CD8-positive, alpha-beta T cell (primary cell): ENCODE measurements at regions of chr22 and their contacts with region 1.

Region 1: DNA sequence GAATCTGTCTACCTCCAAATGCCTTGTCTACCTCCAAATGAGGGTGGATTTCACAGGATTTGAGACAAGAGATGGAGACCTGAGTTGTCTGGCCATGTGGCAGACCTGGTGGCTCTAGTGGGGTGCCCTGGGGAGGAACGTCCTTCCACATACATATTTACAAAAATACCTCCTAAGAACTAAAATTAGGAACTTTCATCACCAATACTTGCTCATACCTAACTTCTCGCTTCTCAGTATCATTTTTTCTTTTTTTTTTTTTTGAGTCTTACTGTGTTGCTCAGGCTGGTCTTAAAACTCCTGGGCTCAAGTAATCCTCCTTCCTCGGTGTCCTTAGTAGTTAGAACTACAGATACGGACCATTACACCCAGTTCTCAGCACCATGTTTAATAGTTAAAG is 117.9 kb downstream of the MED15 start:
- DNase-seq: no peak
- ATAC-seq: no peak
- H3K4me3 ChIP-seq: no peak overlapping the region
- H3K4me3 Mint-ChIP-seq: no peak overlapping the region
- H3K27ac ChIP-seq: no peak overlapping the region
- H3K27ac Mint-ChIP-seq: no peak overlapping the region
- H3K4me1 ChIP-seq: no peaks in the 10 kb centered on the region
- H3K4me1 Mint-ChIP-seq: no peaks in the 10 kb centered on the region
- H3K27me3 ChIP-seq: no peaks in the 10 kb centered on the region
- H3K27me3 Mint-ChIP-seq: no peaks in the 10 kb centered on the region
- CTCF ChIP-seq: no peak

Region 2: GRCh38 chr22:19419464-19420178 is 1205.6 kb before region 1 on chr22:
- CTCF ChIA-PET with region 1: no interaction called
- POLR2A ChIA-PET with region 1: no interaction called
- intact Hi-C with region 1: loop called in 1 of 2 experiments (anchors 5 kb)
- DNase-seq: peak in 7 of 9 experiments; percentile 7 to 91 (median 46)
- ATAC-seq: peak; percentile 91
- H3K4me3 ChIP-seq: no peak overlapping the region
- H3K4me3 Mint-ChIP-seq: peak overlapping the region; percentile 16
- H3K27ac ChIP-seq: peak overlapping the region; percentile 54 to 91
- H3K27ac Mint-ChIP-seq: peak overlapping the region; percentile 92
- H3K4me1 ChIP-seq: peaks cover 44% of the 10 kb centered on the region
- H3K4me1 Mint-ChIP-seq: peaks cover 70% of the 10 kb centered on the region
- H3K27me3 ChIP-seq: no peaks in the 10 kb centered on the region
- H3K27me3 Mint-ChIP-seq: no peaks in the 10 kb centered on the region
- CTCF ChIP-seq: no peak

Region 3: DNA sequence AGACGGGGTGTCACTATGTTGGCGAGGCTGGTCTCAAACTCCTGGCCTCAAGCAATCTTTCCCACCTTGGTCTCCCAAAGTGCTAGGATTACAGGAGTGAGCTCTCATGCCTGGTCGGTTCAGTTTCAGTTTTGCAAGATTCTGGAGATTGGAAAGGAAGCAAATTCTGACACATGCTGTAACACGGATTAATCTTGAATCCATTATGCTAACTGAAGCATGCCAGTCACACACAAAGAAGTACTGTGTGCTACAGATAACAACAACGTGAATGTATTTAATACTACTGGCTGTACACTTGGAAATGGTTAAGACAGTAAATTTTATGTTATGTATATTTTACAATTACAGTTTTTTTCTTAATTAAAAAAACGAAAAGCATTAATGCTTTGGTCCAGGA is 10.2 kb before region 1 on chr22:
- CTCF ChIA-PET with region 1: no interaction called
- POLR2A ChIA-PET with region 1: no interaction called
- intact Hi-C with region 1: no loop called
- DNase-seq: no peak
- ATAC-seq: no peak
- H3K4me3 ChIP-seq: no peak overlapping the region
- H3K4me3 Mint-ChIP-seq: no peak overlapping the region
- H3K27ac ChIP-seq: no peak overlapping the region
- H3K27ac Mint-ChIP-seq: no peak overlapping the region
- H3K4me1 ChIP-seq: peaks cover 8% of the 10 kb centered on the region
- H3K4me1 Mint-ChIP-seq: peaks cover 6% of the 10 kb centered on the region
- H3K27me3 ChIP-seq: no peaks in the 10 kb centered on the region
- H3K27me3 Mint-ChIP-seq: no peaks in the 10 kb centered on the region
- CTCF ChIP-seq: no peak

Region 4: DNA sequence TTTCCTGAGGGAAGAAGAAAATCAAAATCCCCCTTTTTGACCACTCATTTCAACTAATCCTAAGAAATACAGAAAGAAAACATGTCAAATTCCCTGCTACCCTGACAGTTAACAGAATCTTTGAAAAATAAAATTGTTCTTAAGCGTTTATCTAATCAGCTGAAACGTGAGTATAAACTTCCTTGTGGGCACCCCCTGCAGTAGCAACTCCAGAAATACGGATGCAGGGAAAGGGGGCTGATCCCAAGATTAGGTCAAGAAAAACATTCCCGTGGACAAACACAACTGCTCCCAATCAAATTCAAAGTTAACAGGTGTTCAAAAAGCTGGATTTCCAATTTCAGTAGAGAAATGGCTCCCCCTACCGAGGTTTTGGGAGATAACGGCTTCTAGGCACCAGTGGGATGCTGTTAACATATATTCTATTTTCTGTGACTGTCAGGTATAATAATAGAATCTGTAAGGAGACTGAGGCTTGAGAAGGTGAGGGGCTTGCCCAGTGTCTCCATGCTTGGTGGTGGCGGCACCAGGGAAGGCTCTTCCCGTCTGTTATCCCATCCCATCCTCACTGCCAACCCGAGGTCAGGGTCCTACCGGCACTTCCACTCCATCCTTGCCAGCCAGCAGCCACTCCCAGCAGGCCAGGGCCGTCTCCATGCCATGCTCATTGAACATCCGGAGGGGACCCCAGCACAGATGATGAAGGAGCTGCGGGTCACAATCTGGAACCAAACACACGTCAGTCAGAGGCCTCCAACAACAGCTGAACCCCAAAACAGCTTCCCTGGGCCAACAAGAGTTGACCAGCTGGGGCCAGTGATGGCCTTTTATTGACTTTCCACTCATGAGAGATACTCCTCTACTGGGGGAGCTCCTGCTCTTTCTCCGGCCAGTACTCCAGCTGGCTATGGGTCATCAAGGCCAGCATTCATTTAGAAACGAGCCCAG is 116.6 kb after region 1 on chr22:
- CTCF ChIA-PET with region 1: no interaction called
- POLR2A ChIA-PET with region 1: no interaction called
- intact Hi-C with region 1: no loop called
- DNase-seq: peak in 7 of 9 experiments; percentile 15 to 60 (median 50)
- ATAC-seq: no peak
- H3K4me3 ChIP-seq: no peak overlapping the region
- H3K4me3 Mint-ChIP-seq: no peak overlapping the region
- H3K27ac ChIP-seq: no peak overlapping the region
- H3K27ac Mint-ChIP-seq: no peak overlapping the region
- H3K4me1 ChIP-seq: no peaks in the 10 kb centered on the region
- H3K4me1 Mint-ChIP-seq: no peaks in the 10 kb centered on the region
- H3K27me3 ChIP-seq: no peaks in the 10 kb centered on the region
- H3K27me3 Mint-ChIP-seq: no peaks in the 10 kb centered on the region
- CTCF ChIP-seq: peak; percentile 75